ENCODE measurements at regions of chr6 and their contacts with region 1.

Region 1: DNA sequence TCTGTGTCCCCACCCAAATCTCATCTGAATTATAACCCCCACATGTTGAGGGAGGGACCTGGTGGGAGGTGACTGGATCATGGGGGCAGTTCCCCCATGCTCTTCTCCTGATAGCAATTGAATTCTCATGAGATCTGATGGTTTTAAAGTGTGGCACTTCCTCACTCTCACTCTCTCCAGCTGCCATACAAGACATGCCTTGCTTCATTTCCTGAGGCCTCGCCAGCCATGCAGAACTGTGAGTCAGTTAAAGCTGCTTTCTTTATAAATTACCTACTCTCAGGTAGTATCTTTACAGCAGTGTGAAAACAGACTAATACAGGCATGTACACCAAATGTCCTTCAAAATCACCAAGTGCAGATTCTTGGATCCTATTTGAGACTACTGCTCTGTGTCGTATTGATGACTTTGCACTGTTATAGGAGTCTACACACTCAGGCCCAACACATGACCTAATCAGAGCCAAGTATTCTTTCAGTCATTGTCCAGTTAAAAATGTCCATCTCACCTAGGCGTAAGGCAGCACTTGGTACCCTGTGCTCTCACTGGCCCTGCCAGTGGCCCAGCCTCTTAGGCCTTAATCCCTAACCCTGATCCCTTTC is 52.8 kb upstream of the UST start:
- DNase-seq: peak; percentile 76
- H3K4me3 ChIP-seq: peak overlapping the region; percentile 25
- H3K27ac ChIP-seq: peak overlapping the region; percentile 61
- H3K4me1 ChIP-seq: peaks cover 16% of the 10 kb centered on the region
- CTCF ChIP-seq: no peak

Region 2: GRCh38 chr6:148103436-148103835 is 590.5 kb before region 1 on chr6:
- CTCF ChIA-PET with region 1: no interaction called
- POLR2A ChIA-PET with region 1: no interaction called
- intact Hi-C with region 1: no loop called
- DNase-seq: no peak
- H3K4me3 ChIP-seq: no peak overlapping the region
- H3K27ac ChIP-seq: no peak overlapping the region
- H3K4me1 ChIP-seq: no peaks in the 10 kb centered on the region
- CTCF ChIP-seq: no peak

Region 3: GRCh38 chr6:148682990-148683389 is 11.0 kb before region 1 on chr6:
- CTCF ChIA-PET with region 1: interaction called, 3 read pairs
- POLR2A ChIA-PET with region 1: interaction called, 15 read pairs
- intact Hi-C with region 1: no loop called
- DNase-seq: peak; percentile 56
- H3K4me3 ChIP-seq: peak overlapping the region; percentile 37
- H3K27ac ChIP-seq: peak overlapping the region; percentile 39
- H3K4me1 ChIP-seq: peaks cover 26% of the 10 kb centered on the region
- CTCF ChIP-seq: no peak

Region 4: GRCh38 chr6:148765898-148766808 is 72.2 kb after region 1 on chr6:
- CTCF ChIA-PET with region 1: no interaction called
- POLR2A ChIA-PET with region 1: no interaction called
- intact Hi-C with region 1: no loop called
- DNase-seq: no peak
- H3K4me3 ChIP-seq: no peak overlapping the region
- H3K27ac ChIP-seq: no peak overlapping the region
- H3K4me1 ChIP-seq: peaks cover 25% of the 10 kb centered on the region
- CTCF ChIP-seq: no peak